K562 (cell line): ENCODE measurements at regions of chr1 and their contacts with region 1.

Region 1: DNA sequence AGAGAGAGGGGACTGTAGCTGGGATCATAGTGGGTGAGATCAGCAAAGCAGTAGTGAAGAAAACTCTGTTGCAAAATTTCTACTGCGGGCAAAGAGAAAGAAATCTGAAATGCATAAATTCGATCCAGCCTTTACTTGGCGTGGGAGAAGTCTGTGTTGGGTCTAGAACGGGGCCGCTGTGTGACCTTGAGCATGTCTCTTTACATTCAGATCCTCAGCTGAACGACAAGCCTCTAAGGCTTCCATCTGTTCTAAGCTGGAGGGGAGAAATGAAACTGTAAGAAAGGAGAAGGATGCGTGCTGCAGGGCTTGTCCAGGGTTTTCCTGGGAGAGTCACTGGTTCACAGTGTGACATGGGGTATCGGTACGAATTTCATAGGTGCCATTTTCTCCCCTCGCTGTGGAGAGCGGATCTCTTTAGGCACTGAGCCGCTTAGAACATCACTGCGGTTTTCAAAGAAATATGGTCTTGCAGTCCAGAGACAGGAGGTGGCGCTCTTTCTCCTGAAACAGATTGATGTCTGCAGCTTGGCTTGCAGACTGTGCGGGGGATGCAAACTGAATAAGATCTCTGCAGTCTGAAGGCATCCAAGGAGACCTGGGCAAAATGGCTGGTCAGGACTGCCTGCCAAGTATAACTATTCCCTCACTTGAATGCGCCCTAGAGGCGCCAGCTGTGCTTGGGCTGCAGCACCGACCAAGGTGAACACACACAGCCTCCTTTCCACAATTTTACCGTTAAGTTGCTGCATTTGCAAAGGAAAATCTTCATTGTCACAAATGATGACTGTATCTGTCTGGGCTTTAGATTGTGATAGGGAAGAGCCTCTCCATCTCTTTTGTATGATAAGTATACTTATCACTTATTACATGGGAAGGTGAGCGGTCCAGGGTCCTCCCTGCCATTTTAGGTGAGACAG is 104.1 kb downstream of the XCL2 start:
- DNase-seq: peak; percentile 61 to 90 (median 69)
- ATAC-seq: peak; percentile 97
- H3K4me3 ChIP-seq: no peak overlapping the region
- H3K27ac ChIP-seq: no peak overlapping the region
- H3K4me1 ChIP-seq: no peaks in the 10 kb centered on the region; a peak in 1 of 5 replicates
- H3K27me3 ChIP-seq: peaks cover 1 to 32% of the 10 kb centered on the region in 2 experiments; a peak in 3 of 5 replicates
- CTCF ChIP-seq: peak; percentile 90 to 96 (median 94)
- EP300 ChIP-seq: no peak
- POLR2A ChIP-seq: no peak
- RAD21 ChIP-seq: peak; percentile 94 to 99

Region 2: GRCh38 chr1:168092566-168093355 is 347.0 kb before region 1 on chr1:
- CTCF ChIA-PET with region 1: no interaction called
- POLR2A ChIA-PET with region 1: no interaction called
- in situ Hi-C with region 1: no loop called
- intact Hi-C with region 1: loop called (anchors 10 kb)
- DNase-seq: peak in 3 of 4 experiments; percentile 34 to 41 (median 37)
- ATAC-seq: peak; percentile 56
- H3K4me3 ChIP-seq: no peak overlapping the region
- H3K27ac ChIP-seq: no peak overlapping the region
- H3K4me1 ChIP-seq: peaks cover 0 to 8% of the 10 kb centered on the region in 2 experiments; a peak in 2 of 5 replicates
- H3K27me3 ChIP-seq: peaks cover 9 to 39% of the 10 kb centered on the region in 2 experiments; a peak in 4 of 5 replicates
- CTCF ChIP-seq: peak; percentile 43 to 62 (median 59); a peak in 5 of 6 replicates
- EP300 ChIP-seq: no peak
- POLR2A ChIP-seq: no peak
- RAD21 ChIP-seq: peak; percentile 47 to 76; a peak in 3 of 4 replicates

Region 3: DNA sequence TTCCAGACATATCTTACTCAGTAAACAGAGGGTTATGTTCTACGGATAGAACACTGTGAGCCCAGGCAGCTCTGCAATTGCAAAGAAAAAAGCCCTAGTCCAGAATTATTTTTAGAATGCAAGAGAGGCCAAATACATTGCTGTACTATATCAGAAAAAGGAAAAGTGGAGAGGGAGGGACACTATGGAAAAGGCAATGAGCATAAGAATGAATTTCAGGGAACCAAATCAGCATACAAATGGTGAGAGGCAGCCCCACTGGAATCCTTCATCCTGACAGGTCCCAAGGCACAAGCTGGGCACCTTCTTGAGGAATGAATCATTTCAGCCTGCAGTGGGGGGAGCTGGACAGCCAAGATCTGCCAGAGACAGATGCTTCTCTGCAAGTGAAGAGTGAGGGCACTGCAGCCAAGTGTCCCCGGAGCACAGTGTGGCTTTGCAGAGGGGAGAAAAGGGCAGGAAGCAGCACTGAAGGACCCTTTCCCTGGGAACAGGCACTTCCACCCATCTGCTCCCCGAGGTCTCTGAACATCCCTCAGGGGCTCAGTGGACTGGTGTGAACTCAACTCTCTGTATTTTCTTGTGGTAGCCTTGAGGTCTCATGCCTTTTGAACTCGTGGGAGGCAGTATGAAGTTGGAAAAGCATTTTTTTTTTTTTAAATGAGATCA is 11.5 kb before region 1 on chr1:
- CTCF ChIA-PET with region 1: no interaction called
- POLR2A ChIA-PET with region 1: interaction called, 11 read pairs
- in situ Hi-C with region 1: no loop called
- intact Hi-C with region 1: no loop called
- DNase-seq: no peak
- ATAC-seq: no peak
- H3K4me3 ChIP-seq: no peak overlapping the region
- H3K27ac ChIP-seq: no peak overlapping the region
- H3K4me1 ChIP-seq: peaks cover 0 to 3% of the 10 kb centered on the region in 2 experiments; a peak in 2 of 5 replicates
- H3K27me3 ChIP-seq: 0 out of 5 replicates have a peak, but pooled peaks cover 4 to 7% of the 10 kb centered on the region in 2 experiments
- CTCF ChIP-seq: no peak
- EP300 ChIP-seq: no peak
- POLR2A ChIP-seq: no peak
- RAD21 ChIP-seq: no peak

Region 4: DNA sequence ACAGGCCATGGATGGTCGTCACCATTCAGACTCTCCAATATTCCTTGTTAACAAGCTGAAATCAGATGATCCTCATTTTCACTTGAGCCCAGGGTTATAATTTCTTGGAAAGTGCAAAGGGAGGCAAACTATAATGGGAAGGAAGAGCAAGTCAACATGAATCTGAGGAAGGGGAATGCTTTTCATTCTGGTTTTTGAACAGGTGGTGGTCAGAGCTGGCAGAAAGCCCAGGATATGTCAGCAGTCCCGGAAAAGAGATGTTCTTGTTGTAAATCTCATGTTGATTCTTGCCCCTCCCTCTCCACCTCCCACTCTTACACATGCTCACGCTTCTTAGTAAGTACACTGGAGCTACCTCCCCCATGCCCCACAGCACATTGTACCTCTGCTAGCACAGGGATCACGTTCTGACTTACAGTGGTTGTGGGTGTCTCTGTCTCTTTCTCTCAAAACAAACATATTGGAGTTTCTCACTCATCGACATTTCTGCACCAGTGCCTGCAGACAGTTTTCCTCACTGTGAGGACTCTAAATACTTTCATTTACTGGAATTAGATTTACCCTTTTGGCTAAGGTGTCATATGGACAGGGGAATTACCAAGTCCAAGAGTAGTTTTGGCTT is 26.5 kb after region 1 on chr1:
- CTCF ChIA-PET with region 1: no interaction called
- POLR2A ChIA-PET with region 1: no interaction called
- in situ Hi-C with region 1: no loop called
- intact Hi-C with region 1: loop called (anchors 2 kb)
- DNase-seq: peak; percentile 44 to 91 (median 72)
- ATAC-seq: peak; percentile 85
- H3K4me3 ChIP-seq: no peak overlapping the region
- H3K27ac ChIP-seq: no peak overlapping the region
- H3K4me1 ChIP-seq: peaks cover 2 to 48% of the 10 kb centered on the region in 2 experiments; a peak in 4 of 5 replicates
- H3K27me3 ChIP-seq: no peaks in the 10 kb centered on the region
- CTCF ChIP-seq: no peak
- EP300 ChIP-seq: peak; percentile 73
- POLR2A ChIP-seq: no peak
- RAD21 ChIP-seq: no peak

Region 5: GRCh38 chr1:168572633-168573032 is 132.9 kb after region 1 on chr1:
- CTCF ChIA-PET with region 1: interaction called, 12 read pairs
- POLR2A ChIA-PET with region 1: no interaction called
- in situ Hi-C with region 1: no loop called
- intact Hi-C with region 1: loop called (anchors 1 kb)
- DNase-seq: no peak
- ATAC-seq: no peak
- H3K4me3 ChIP-seq: no peak overlapping the region
- H3K27ac ChIP-seq: no peak overlapping the region
- H3K4me1 ChIP-seq: no peaks in the 10 kb centered on the region
- H3K27me3 ChIP-seq: peaks cover 0 to 3% of the 10 kb centered on the region in 2 experiments; a peak in 1 of 5 replicates
- CTCF ChIP-seq: no peak
- EP300 ChIP-seq: no peak
- POLR2A ChIP-seq: no peak
- RAD21 ChIP-seq: no peak

Region 6: GRCh38 chr1:168585191-168585590 is 145.5 kb after region 1 on chr1:
- CTCF ChIA-PET with region 1: no interaction called
- POLR2A ChIA-PET with region 1: interaction called, 3 read pairs
- in situ Hi-C with region 1: loop called (anchors 5 kb)
- intact Hi-C with region 1: no loop called
- DNase-seq: no peak
- ATAC-seq: no peak
- H3K4me3 ChIP-seq: no peak overlapping the region
- H3K27ac ChIP-seq: no peak overlapping the region
- H3K4me1 ChIP-seq: no peaks in the 10 kb centered on the region
- H3K27me3 ChIP-seq: peaks cover 0 to 7% of the 10 kb centered on the region in 2 experiments; a peak in 1 of 5 replicates
- CTCF ChIP-seq: no peak
- EP300 ChIP-seq: no peak
- POLR2A ChIP-seq: no peak
- RAD21 ChIP-seq: no peak

Region 7: GRCh38 chr1:169001353-169001752 is 561.6 kb after region 1 on chr1:
- CTCF ChIA-PET with region 1: no interaction called
- POLR2A ChIA-PET with region 1: no interaction called
- in situ Hi-C with region 1: no loop called
- intact Hi-C with region 1: no loop called
- DNase-seq: no peak
- ATAC-seq: no peak
- H3K4me3 ChIP-seq: no peak overlapping the region
- H3K27ac ChIP-seq: no peak overlapping the region
- H3K4me1 ChIP-seq: no peaks in the 10 kb centered on the region
- H3K27me3 ChIP-seq: peaks cover 4 to 9% of the 10 kb centered on the region in 2 experiments; a peak in 2 of 5 replicates
- CTCF ChIP-seq: no peak
- EP300 ChIP-seq: no peak
- POLR2A ChIP-seq: no peak
- RAD21 ChIP-seq: no peak